Left cardiac atrium (tissue), 4 donors: ENCODE measurements at regions of chr2 and their contacts with region 1.

Region 1: GRCh38 chr2:62415019-62415431 is 91.0 kb downstream of the TMEM17 start:
- DNase-seq: no peak
- ATAC-seq: no peak

Region 2: DNA sequence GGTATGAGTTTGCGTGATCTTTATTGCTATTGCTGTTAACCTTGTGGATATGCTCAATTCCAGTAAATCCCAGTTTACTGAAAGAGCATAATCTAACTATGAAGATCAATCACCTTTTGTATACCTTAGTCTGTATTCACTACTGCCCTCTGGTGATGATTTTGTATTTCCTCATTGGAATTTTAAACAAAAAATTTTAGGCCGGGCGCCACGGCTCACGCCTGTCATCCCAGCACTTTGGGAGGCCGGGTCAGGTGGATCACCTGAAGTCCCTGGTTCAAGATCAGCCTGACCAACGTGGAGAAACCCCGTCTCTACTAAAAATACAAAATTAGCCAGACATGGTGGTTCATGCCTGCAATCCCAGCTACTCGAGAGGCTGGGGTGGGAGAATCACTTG is 504.4 kb before region 1 on chr2:
- intact Hi-C with region 1: loop called in 1 of 2 experiments (anchors 5 kb)
- DNase-seq: no peak
- ATAC-seq: no peak

Region 3: DNA sequence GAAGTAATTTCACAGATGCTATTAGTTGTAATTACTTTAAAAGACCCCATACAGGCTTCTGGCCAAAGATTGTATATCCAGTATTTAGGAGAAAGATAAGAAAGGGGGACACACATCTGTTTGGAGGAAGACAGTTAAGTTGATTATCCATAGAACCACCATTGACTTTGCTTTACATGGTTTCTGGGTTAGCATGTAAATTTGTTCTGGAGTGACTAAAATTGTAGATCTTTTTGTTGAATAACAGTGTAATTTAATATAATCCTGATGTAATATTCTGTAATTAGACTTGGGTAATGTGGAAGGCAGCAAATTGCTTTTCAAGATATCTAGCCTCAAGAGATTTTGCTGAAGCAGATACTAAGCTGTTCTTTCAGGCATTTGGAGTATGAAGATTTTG is 492.3 kb before region 1 on chr2:
- intact Hi-C with region 1: loop called (anchors 2 to 5 kb)
- DNase-seq: no peak
- ATAC-seq: no peak

Region 4: DNA sequence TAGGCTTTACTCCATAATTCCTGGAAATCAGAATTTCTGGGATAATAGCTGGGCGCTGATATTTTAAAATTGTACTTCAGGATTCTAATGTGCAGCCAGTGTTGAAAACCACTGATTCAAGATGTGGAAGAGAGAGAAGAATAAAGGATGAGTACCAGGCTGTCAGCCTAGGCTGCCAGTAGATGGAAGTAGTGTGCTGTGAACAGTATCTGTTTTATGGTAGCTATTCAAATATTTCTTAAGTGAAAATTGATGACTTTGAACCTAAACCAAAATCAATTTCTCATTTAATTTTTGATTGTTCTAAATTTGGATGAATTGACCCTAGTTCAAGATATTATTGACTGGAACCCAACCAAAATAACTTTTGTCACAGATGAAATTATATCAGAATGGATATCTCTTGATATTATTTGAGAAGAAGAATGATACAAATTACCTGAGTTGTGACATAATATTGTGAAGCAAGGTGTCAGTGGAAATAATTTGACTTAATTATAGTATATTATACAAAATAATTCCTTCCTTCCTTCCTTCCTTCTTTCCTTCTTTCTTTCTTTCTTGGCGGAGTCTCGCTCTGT is 421.5 kb before region 1 on chr2:
- intact Hi-C with region 1: loop called in 1 of 2 experiments (anchors 2 kb)
- DNase-seq: no peak
- ATAC-seq: peak in 1 of 2 donors; percentile 67

Region 5: DNA sequence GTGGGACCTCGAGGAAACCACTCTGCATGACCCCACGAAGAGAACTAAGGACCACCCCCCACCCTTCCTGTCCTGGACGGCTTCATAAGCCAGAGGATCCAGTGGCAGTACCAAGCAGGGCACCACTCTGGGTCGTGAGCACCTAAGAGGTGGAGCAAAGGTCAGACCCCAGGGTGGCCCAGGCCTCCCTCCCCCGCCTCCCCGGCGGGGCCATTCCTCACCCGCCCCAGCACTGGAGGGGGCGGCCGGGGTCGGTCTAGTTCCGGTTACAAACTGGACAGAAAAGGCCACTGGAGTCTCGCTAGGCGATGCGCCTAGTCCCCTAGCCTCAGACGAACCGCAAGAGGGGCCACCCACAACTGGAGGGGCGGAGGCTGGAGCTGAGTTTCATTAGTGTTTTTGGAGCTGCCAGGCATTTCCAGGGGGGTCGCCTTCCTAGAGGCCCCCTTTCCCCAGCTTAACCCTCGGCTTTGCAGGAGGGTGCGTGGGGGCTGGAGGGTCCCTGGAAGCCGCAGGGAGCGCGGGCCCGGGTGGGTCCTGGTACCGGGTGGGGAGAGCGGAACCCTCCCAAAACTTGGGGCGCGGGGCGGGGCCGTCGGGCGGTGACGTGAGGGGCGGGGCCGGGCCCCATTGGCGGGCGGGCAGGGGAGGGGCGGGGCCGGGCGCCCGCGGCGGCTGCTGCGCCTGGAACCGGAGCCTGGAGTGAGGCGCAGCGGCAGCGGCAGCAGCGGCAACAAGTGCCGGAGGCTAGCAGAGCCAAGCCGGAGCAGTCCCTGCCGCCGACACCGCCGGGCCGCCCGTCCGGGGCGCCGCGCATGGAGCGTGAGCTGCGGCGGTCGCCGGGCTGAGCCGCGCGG is 219.4 kb before region 1 on chr2 and contains the start of gene B3GNT2:
- intact Hi-C with region 1: loop called in 1 of 2 experiments (anchors 10 kb)
- DNase-seq: peak; percentile 86
- ATAC-seq: peak; percentile 93 to 95
- total RNA-seq, gene B3GNT2: 13.4 to 13.8 TPM